ENCODE measurements at regions of chrX and their contacts with region 1.

Region 1: GRCh38 chrX:65697915-65698796 is 30.7 kb downstream of the MSN start:
- DNase-seq: peak; percentile 8 to 81 (median 78)
- ATAC-seq: peak; percentile 84
- H3K4me3 ChIP-seq: peak overlapping the region; percentile 36
- H3K4me3 Mint-ChIP-seq: peak overlapping the region; percentile 73 to 93 (median 86)
- H3K27ac ChIP-seq: peak overlapping the region; percentile 68
- H3K27ac Mint-ChIP-seq: peak overlapping the region; percentile 91 to 98 (median 93)
- H3K4me1 ChIP-seq: peaks cover 70 to 77% of the 10 kb centered on the region in 2 donors
- H3K4me1 Mint-ChIP-seq: peaks cover 34 to 100% (median 85%) of the 10 kb centered on the region in 7 donors
- H3K27me3 ChIP-seq: no peaks in the 10 kb centered on the region
- H3K27me3 Mint-ChIP-seq: no peaks in the 10 kb centered on the region

Region 2: GRCh38 chrX:65601530-65602220 is 96.5 kb before region 1 on chrX:
- CTCF ChIA-PET with region 1: interaction called, 9 read pairs
- POLR2A ChIA-PET with region 1: interaction called, 11 read pairs
- intact Hi-C with region 1: no loop called
- DNase-seq: peak in 8 of 9 donors; percentile 34 to 74 (median 48)
- ATAC-seq: peak; percentile 83
- H3K4me3 ChIP-seq: peak overlapping the region; percentile 27
- H3K4me3 Mint-ChIP-seq: peak overlapping the region; percentile 35 to 73 (median 60)
- H3K27ac ChIP-seq: peak overlapping the region; percentile 59
- H3K27ac Mint-ChIP-seq: peak overlapping the region; percentile 89 to 100 (median 95)
- H3K4me1 ChIP-seq: peaks cover 52 to 60% of the 10 kb centered on the region in 2 donors
- H3K4me1 Mint-ChIP-seq: peaks cover 35 to 89% (median 76%) of the 10 kb centered on the region in 7 donors
- H3K27me3 ChIP-seq: no peaks in the 10 kb centered on the region
- H3K27me3 Mint-ChIP-seq: no peaks in the 10 kb centered on the region

Region 3: DNA sequence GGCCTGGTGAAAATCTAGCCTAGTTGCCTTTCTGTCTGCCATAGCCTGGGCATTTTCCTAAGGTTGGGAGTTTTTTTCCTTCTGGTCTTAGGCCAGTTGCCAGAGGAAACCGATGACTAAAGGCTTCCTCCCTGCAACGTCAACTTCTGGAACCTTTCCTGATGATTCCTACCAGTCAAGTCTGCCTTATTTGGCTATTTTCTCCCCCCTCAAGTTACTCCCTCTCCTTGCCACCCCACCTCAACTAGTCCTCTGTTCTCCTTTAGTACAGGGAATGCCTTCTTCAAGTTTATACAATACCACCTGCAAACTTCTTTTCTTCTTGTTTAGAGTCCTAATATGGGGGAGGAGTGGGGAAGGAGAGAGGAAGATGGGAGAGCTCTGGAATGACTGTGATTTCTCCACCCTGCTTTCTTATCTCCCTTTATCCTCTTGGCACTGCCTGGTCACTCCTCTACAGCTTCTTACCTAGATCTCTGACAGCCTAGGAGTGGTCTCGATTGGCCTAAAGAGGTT is 20.1 kb before region 1 on chrX:
- CTCF ChIA-PET with region 1: interaction called, 10 read pairs
- POLR2A ChIA-PET with region 1: interaction called, 10 read pairs
- intact Hi-C with region 1: loop called (anchors 1 to 2 kb)
- DNase-seq: no peak
- ATAC-seq: no peak
- H3K4me3 ChIP-seq: no peak overlapping the region
- H3K4me3 Mint-ChIP-seq: peak overlapping the region; percentile 41 to 94 (median 71)
- H3K27ac ChIP-seq: no peak overlapping the region
- H3K27ac Mint-ChIP-seq: peak overlapping the region in 8 of 9 donors; percentile 23 to 88 (median 82)
- H3K4me1 ChIP-seq: peaks cover 66 to 82% of the 10 kb centered on the region in 2 donors
- H3K4me1 Mint-ChIP-seq: peaks cover 40 to 95% (median 85%) of the 10 kb centered on the region in 7 donors
- H3K27me3 ChIP-seq: no peaks in the 10 kb centered on the region
- H3K27me3 Mint-ChIP-seq: no peaks in the 10 kb centered on the region

Region 4: DNA sequence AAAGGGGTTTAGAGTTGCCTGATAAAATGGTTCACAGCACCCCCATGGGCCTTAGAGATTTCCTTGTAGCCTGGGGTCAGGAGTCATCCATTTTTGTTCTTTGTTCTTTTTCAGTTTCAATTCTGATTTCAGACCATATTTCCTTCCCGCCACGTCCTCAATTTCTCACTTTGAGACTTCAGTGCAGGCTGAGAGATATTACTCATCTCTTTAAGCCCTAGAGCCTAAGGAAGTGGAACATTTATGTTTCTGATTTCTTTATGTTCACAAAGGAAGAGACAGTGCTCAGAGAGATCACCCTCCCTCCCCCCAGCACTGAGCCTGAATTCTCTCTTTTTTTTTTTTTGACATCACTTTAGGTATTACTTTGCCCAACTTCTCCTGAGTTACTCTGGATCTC is 25.6 kb after region 1 on chrX:
- CTCF ChIA-PET with region 1: interaction called, 4 read pairs
- POLR2A ChIA-PET with region 1: interaction called, 4 read pairs
- intact Hi-C with region 1: loop called (anchors 1 kb)
- DNase-seq: peak in 3 of 9 donors; percentile 16 to 50 (median 20)
- ATAC-seq: peak; percentile 59
- H3K4me3 ChIP-seq: no peak overlapping the region
- H3K4me3 Mint-ChIP-seq: peak overlapping the region; percentile 22 to 75 (median 60)
- H3K27ac ChIP-seq: peak overlapping the region; percentile 66
- H3K27ac Mint-ChIP-seq: peak overlapping the region; percentile 41 to 92 (median 84)
- H3K4me1 ChIP-seq: peaks cover 54 to 68% of the 10 kb centered on the region in 2 donors
- H3K4me1 Mint-ChIP-seq: peaks cover 45 to 95% (median 86%) of the 10 kb centered on the region in 7 donors
- H3K27me3 ChIP-seq: no peaks in the 10 kb centered on the region
- H3K27me3 Mint-ChIP-seq: no peaks in the 10 kb centered on the region

Region 5: GRCh38 chrX:65772842-65773241 is 74.7 kb after region 1 on chrX:
- CTCF ChIA-PET with region 1: no interaction called
- POLR2A ChIA-PET with region 1: no interaction called
- intact Hi-C with region 1: no loop called
- DNase-seq: no peak
- ATAC-seq: no peak
- H3K4me3 ChIP-seq: no peak overlapping the region
- H3K4me3 Mint-ChIP-seq: no peak overlapping the region
- H3K27ac ChIP-seq: no peak overlapping the region
- H3K27ac Mint-ChIP-seq: no peak overlapping the region
- H3K4me1 ChIP-seq: no peaks in the 10 kb centered on the region
- H3K4me1 Mint-ChIP-seq: peaks cover under 1 to 12% (median 7%) of the 10 kb centered on the region in 7 donors
- H3K27me3 ChIP-seq: no peaks in the 10 kb centered on the region
- H3K27me3 Mint-ChIP-seq: no peaks in the 10 kb centered on the region